Sciatic nerve (tissue), 2 donors: ENCODE measurements at regions of chr14 and their contacts with region 1.

Region 1: DNA sequence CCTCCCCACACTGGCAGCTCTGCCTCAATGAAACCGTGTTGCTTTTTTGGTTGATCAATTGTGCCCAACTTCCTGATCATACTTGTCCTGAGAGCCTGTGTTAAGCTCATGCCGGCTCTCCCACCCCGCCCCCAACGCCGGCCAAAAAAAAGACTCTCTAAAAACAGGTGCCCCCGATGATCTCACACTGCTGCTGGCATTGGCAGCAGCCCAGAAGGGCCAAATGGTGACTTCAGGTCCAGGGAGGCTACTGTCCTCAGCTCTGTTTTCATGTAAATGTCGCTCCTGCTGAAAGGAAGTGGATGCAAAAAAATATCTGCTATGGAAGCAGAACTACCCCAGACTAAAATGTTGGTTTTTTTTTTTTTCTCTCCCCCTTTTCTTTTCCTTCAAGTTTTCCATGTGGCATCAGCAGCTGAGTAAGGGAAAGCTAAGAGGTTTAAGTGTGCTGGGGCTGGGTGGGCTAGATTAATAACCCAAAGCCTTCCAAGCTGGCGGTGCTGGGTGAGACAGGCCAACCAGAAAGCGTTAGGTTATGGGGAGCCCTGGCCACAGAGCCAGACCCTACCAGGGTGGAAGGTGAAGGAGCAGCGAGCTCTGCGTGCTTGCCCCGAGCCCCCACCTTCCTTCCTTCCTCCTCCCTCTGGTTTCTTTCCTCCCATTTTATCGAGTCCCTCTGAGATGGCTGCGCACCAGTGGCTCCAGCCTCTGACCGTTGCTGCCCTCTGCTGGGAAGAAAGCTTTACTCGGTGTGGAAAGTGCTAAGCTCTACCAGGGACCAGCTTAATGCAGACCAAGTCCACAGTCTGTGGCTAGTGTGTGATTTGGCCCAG is 396.1 kb downstream of the NRXN3 start:
- DNase-seq: peak; percentile 86
- ATAC-seq: peak; percentile 94

Region 2: GRCh38 chr14:77862154-77862786 is 704.0 kb before region 1 on chr14:
- intact Hi-C with region 1: loop called (anchors 10 kb)
- DNase-seq: peak; percentile 89
- ATAC-seq: peak; percentile 81

Region 3: GRCh38 chr14:78633752-78634151 is 67.5 kb after region 1 on chr14:
- intact Hi-C with region 1: no loop called
- DNase-seq: no peak
- ATAC-seq: no peak